OCI-LY7 (cell line): ENCODE measurements at regions of chr6 and their contacts with region 1.

Region 1: DNA sequence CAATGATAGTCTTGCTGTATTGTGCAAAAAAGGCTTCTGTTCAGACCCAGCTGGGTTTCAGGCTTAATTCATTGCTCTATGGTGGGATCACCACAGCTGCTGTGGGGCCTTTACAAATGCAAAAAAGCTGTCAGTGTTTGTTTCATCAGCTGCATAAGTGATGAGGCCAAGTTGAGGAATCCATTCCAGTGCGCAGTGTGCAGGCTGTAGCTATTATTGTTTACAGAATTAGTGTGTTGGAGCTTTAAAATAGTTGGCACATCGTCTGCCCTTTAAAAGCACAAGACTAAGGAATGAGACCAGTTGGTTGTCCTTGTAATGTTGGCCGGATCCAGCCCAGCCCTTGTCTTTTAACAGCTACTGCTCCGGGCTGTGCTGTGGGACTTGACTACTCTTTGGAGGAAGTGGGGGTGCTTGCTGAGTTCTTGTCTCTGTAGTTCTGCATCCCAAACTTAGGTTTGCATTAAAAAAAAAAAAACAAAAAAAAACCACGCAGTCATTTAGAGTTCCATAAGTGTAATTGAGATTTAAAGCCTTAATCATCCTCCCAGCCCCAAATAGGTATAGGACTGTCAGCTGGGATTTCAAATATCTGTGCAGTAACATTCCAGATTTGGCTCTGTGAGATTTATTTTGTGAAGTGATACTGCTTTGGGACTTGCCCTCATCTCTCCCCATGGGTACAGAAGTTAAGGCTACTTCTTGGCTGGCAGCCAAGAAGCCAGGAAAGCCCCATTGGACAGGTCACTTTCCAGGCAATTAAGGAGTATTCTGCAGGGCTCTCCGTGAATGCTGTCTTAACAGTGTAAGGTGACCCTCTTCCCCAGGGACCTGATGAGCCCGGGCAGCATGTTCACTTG is 19.3 kb downstream of the JARID2 start:
- DNase-seq: peak; percentile 51
- H3K4me3 ChIP-seq: peak overlapping the region; percentile 30
- H3K27ac ChIP-seq: no peak overlapping the region
- H3K4me1 ChIP-seq: peaks cover 76% of the 10 kb centered on the region
- CTCF ChIP-seq: no peak

Region 2: DNA sequence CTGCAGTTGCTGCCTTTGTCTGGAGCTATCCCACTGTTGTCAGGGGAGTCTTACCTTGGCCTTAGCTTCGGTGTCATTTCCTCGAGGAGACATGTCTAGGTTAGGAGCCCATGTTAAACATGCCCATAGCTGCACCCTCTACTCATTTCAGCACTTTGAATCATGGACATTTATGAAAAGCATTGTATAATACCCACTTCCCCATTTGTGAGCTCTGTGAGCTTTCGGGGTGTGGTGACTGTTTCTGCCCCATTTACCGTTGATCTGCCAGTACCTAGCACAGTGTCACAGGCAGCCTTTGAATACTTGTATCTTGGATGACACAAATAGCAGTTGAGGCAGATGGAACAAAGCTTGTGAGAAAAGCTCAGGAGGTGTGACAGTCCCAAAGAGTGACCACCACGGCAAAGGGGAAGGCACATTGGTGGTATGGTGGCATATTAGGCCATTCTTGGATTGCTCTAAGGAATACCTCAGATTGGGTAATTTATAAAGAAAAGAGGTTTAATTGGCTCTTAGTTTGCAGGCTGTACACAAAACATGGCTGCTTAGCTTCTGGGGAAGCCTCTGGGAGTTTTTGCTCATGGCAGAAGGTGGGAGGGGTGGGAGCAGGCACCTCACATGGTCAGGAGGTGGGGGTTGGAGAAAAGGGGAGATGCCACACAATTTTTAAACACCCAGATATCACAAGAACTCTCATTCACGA is 22.7 kb after region 1 on chr6:
- CTCF ChIA-PET with region 1: interaction called, 3 read pairs
- POLR2A ChIA-PET with region 1: interaction called, 10 read pairs
- intact Hi-C with region 1: no loop called
- DNase-seq: peak; percentile 64
- H3K4me3 ChIP-seq: no peak overlapping the region
- H3K27ac ChIP-seq: no peak overlapping the region
- H3K4me1 ChIP-seq: peaks cover 13% of the 10 kb centered on the region
- CTCF ChIP-seq: no peak

Region 3: GRCh38 chr6:15340775-15341174 is 75.6 kb after region 1 on chr6:
- CTCF ChIA-PET with region 1: no interaction called
- POLR2A ChIA-PET with region 1: no interaction called
- intact Hi-C with region 1: no loop called
- DNase-seq: peak; percentile 42
- H3K4me3 ChIP-seq: peak overlapping the region; percentile 15
- H3K27ac ChIP-seq: peak overlapping the region; percentile 1
- H3K4me1 ChIP-seq: peaks cover 30% of the 10 kb centered on the region
- CTCF ChIP-seq: no peak